ENCODE measurements at regions of chr2 and their contacts with region 1.

Region 1: DNA sequence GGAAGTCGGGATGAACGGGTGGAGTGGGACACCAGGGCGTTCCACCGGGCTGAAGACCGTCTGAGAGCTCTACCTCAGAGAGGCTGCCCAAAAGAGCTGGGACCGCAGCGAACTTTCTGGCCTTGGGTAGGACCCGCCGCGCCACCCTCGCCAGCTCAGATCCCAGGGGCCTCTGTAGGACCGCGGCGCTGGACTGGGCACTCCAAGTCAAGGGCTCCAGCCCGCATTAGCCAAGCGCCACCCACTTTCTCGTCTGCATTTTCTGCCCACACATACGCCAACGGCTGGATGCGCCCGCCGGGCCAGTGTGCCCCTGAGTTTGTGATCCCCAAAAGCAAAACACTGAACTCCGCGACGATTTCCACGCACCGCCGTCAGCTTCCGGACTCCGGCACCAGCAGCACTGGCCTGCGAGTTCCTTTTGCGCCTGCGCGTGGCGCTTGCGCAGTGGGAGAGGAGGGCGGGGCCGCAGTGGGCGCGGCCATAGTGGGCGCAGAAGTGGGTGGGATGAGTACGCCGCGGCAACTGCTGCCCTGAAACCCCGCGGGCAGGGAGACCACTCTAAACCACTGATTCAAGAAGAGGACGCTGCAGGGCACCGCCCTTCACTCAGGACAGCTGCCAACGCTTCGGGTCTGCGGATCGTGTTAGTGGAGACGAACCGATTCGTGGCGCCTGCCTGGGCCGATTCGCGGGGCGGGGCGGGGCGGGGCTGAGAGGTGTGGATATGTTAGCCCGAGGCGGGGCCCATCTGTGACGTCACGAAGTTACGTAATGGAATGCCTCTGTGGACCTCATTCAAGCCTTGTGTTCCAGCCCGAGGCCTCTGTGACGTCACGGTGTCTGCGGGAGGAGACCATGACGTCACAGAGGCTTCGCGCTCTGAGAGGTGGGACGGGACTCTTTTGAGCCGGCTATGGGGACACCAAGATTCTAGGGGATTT is 10.5 kb downstream of the OSR1 start:
- DNase-seq: peak; percentile 86
- ATAC-seq: peak; percentile 95
- H3K4me3 ChIP-seq: peak overlapping the region; percentile 89
- H3K27ac ChIP-seq: peak overlapping the region; percentile 91
- H3K4me1 ChIP-seq: peaks cover 6% of the 10 kb centered on the region
- H3K27me3 ChIP-seq: peaks cover 4 to 10% of the 10 kb centered on the region in 2 experiments
- CTCF ChIP-seq: no peak
- EP300 ChIP-seq: no peak
- POLR2A ChIP-seq: peak; percentile 99
- RAD21 ChIP-seq: no peak

Region 2: DNA sequence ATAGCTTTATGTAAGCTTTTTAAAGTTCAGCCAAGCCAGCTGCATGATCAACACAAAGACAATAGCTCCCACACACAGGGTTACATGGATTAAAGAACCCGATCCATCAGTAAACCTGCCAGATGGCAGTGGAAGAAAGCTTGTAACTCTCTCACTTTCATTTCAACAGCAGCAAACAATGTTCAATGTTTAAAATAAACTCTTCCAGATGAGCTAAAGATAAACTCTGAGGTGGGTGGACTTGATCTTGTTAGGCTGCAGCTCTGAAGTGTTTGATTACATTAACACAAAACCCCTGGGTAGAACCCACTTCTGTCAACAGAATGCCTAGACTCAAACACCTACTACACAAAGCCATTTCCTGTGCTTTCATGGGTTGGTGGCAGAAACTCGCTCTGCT is 801.3 kb before region 1 on chr2:
- CTCF ChIA-PET with region 1: no interaction called
- POLR2A ChIA-PET with region 1: no interaction called
- RAD21 ChIA-PET with region 1: no interaction called
- SMC1A ChIA-PET with region 1: no interaction called
- in situ Hi-C with region 1: no loop called
- intact Hi-C with region 1: loop called (anchors 10 kb)
- DNase-seq: no peak
- ATAC-seq: peak; percentile 27; the same call in 2 of the 3 replicates
- H3K4me3 ChIP-seq: no peak overlapping the region
- H3K27ac ChIP-seq: no peak overlapping the region
- H3K4me1 ChIP-seq: no peaks in the 10 kb centered on the region
- H3K27me3 ChIP-seq: no peaks in the 10 kb centered on the region
- CTCF ChIP-seq: no peak
- EP300 ChIP-seq: no peak
- POLR2A ChIP-seq: no peak
- RAD21 ChIP-seq: no peak

Region 3: GRCh38 chr2:18560031-18560796 is 787.7 kb before region 1 on chr2 and contains the start of gene RDH14:
- CTCF ChIA-PET with region 1: no interaction called
- POLR2A ChIA-PET with region 1: no interaction called
- RAD21 ChIA-PET with region 1: no interaction called
- SMC1A ChIA-PET with region 1: no interaction called
- in situ Hi-C with region 1: no loop called
- intact Hi-C with region 1: loop called (anchors 1 kb)
- DNase-seq: peak; percentile 69
- ATAC-seq: peak; percentile 96
- H3K4me3 ChIP-seq: peak within 1 kb of the TSS; percentile 82
- H3K27ac ChIP-seq: peak within 1 kb of the TSS; percentile 84
- H3K4me1 ChIP-seq: no peaks in the 10 kb centered on the region
- H3K27me3 ChIP-seq: no peaks in the 10 kb centered on the region
- CTCF ChIP-seq: no peak
- EP300 ChIP-seq: no peak
- POLR2A ChIP-seq: peak; percentile 86
- RAD21 ChIP-seq: no peak
- polyA plus RNA-seq, gene RDH14: 15.5 to 17.3 TPM

Measured in GM12878 (cell line).